ENCODE measurements at regions of chr16 and their contacts with region 1.

Region 1: GRCh38 chr16:75011634-75012307 is 12.9 kb downstream of the ZNRF1 start:
- DNase-seq: peak; percentile 82
- H3K4me3 Mint-ChIP-seq: peak overlapping the region; percentile 58
- H3K27ac Mint-ChIP-seq: peak overlapping the region; percentile 89
- H3K4me1 Mint-ChIP-seq: peaks cover 53% of the 10 kb centered on the region
- H3K27me3 Mint-ChIP-seq: no peaks in the 10 kb centered on the region

Region 2: GRCh38 chr16:74936902-74937560 is 74.7 kb before region 1 on chr16:
- CTCF ChIA-PET with region 1: no interaction called
- POLR2A ChIA-PET with region 1: no interaction called
- intact Hi-C with region 1: loop called (anchors 5 kb)
- DNase-seq: peak; percentile 49
- H3K4me3 Mint-ChIP-seq: no peak overlapping the region
- H3K27ac Mint-ChIP-seq: peak overlapping the region; percentile 49
- H3K4me1 Mint-ChIP-seq: peaks cover 8% of the 10 kb centered on the region
- H3K27me3 Mint-ChIP-seq: no peaks in the 10 kb centered on the region

Region 3: GRCh38 chr16:74998481-74999218 is 13.1 kb before region 1 on chr16 and contains the start of gene ZNRF1:
- CTCF ChIA-PET with region 1: interaction called, 29 read pairs
- POLR2A ChIA-PET with region 1: interaction called, 12 read pairs
- intact Hi-C with region 1: loop called (anchors 1 kb)
- DNase-seq: peak; percentile 90
- H3K4me3 Mint-ChIP-seq: peak within 1 kb of the TSS; percentile 88
- H3K27ac Mint-ChIP-seq: peak within 1 kb of the TSS; percentile 84
- H3K4me1 Mint-ChIP-seq: peaks cover 32% of the 10 kb centered on the region
- H3K27me3 Mint-ChIP-seq: no peaks in the 10 kb centered on the region
- total RNA-seq, gene ZNRF1: 40.9 to 45.6 TPM

Region 4: GRCh38 chr16:75064403-75065148 is 52.8 kb after region 1 on chr16:
- CTCF ChIA-PET with region 1: interaction called, 6 read pairs
- POLR2A ChIA-PET with region 1: interaction called, 6 read pairs
- intact Hi-C with region 1: loop called (anchors 5 kb)
- DNase-seq: peak; percentile 62
- H3K4me3 Mint-ChIP-seq: peak overlapping the region; percentile 5
- H3K27ac Mint-ChIP-seq: no peak overlapping the region
- H3K4me1 Mint-ChIP-seq: peaks cover 25% of the 10 kb centered on the region
- H3K27me3 Mint-ChIP-seq: no peaks in the 10 kb centered on the region

Region 5: DNA sequence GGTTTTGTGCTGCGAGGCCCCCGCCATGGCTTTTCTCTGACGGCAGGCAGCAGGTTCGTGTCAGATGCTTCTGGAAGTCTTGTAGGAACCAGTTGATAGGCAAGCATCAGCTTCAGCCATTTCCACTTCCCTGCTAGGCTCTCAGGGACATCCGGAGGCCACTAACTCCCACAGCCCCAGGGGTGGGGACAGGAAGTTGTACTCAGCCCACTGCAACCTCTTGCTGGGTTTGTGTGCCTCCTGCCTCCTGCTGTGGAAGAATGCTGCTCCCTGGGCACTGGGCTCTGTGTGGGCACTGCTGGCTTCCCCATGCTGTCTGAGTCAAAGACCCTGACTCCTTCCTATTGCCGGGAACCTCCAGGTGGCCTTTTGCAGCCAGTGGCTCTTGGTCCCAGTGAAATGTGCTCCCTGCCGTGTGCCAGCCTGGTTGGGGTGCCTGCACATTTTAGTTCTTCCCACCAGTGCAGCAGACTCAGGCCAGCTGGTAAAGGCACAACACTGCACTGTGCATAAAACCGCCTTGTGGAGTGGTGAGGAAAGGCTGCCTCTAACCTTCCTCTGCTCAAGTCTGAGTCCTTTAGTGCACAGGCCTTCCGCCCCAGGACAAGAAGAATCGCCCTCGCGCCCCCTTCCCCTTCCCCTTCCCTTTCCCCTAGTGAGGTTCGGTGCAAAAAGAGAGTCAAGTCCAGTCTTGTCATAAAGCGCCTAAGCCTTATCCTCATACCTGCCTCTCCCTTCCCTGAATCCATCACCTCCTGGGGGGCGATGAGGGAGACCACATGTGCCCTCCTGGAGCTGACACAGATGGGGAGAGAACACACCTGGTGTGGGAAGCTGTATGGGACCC is 88.2 kb after region 1 on chr16:
- CTCF ChIA-PET with region 1: interaction called, 4 read pairs
- POLR2A ChIA-PET with region 1: interaction called, 18 read pairs
- intact Hi-C with region 1: loop called (anchors 1 kb)
- DNase-seq: peak; percentile 76
- H3K4me3 Mint-ChIP-seq: peak overlapping the region; percentile 50
- H3K27ac Mint-ChIP-seq: peak overlapping the region; percentile 92
- H3K4me1 Mint-ChIP-seq: peaks cover 57% of the 10 kb centered on the region
- H3K27me3 Mint-ChIP-seq: no peaks in the 10 kb centered on the region

Measured in activated CD4-positive, alpha-beta memory T cell treated with anti-CD3 and anti-CD28 coated beads for 36 hours (primary cell).